PC-9 (cell line): ENCODE measurements at regions of chr12 and their contacts with region 1.

Region 1: DNA sequence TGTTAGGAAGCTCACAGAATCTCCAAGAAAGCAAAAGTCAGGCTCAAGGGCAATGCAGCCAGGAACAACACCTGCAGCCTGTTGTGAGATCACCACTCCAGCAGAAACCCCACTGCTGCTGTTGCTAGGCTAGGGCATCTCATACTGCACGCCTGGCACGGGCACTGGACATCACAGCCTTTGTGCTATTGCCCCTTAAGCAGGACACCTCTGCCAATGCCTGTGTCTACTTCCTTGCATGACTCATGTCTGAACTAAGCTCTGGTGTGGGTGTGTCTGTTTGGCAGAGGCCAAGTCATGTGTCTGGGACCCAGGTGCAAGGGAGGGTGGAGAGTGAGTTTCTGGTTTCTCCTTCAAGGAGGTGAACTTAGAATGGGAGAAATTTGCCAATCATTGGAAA is 10.0 kb upstream of the DDX47 start:
- DNase-seq: peak; percentile 97 to 100
- H3K4me3 ChIP-seq: peak overlapping the region; percentile 47; the same call in 1 of the 2 replicates
- H3K27ac ChIP-seq: peak overlapping the region; percentile 100
- H3K4me1 ChIP-seq: peaks cover 91% of the 10 kb centered on the region
- H3K27me3 ChIP-seq: no peaks in the 10 kb centered on the region
- CTCF ChIP-seq: no peak

Region 2: DNA sequence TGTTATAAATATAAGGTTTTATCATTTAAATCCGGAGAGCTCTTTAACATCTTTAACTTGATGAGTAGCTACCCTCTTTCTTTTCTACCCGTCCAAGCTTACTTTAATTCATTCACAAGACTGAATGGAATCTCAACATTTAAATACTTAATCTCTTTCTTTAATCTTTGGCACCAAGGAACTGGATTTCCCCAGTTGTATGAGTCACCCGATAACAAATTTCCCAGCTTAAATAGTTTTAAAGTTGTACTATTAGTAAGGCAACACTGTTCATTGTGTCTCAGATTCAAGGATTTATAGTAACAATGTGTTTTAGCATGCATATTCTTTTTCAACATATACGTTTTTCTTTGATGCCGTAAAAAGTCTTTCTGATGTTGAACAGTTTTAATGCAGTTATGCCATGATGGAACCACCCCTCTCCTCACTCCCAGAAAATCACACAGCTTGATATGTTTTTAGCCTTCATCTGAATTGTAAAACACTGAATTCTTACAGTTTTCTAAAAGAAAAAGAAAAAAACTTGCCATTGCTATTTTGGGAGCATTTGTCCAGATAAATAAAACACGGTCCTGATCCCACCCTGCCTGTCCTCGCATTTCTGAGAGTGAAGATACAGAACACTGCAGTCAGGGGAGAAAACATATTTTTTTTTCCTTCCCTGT is 520.3 kb before region 1 on chr12:
- CTCF ChIA-PET with region 1: no interaction called
- POLR2A ChIA-PET with region 1: interaction called, 16 read pairs
- intact Hi-C with region 1: no loop called
- DNase-seq: peak in 1 of 2 experiments; percentile 81
- H3K4me3 ChIP-seq: no peak overlapping the region
- H3K27ac ChIP-seq: 0 out of 2 replicates have a peak overlapping the region, but pooled peaks have one; percentile 25
- H3K4me1 ChIP-seq: peaks cover 14% of the 10 kb centered on the region
- H3K27me3 ChIP-seq: no peaks in the 10 kb centered on the region
- CTCF ChIP-seq: no peak

Region 3: DNA sequence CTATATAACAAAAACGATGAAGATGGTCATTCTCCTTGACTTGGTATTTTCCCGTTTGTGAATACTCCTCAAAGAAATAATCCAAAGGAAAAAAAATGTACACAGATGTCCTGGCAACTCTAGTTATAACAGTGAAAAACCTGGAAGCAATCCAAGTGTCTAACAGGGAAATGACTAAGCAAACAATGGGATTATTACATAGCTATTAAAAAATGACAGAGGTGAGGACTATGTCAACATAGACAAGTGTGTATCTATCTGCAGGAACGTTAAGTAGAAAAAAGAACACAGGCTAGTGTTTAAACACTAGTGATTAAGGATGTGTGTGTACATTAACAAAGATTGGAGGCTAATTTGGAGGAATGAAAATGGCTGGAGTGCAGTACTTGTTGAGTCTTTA is 23.7 kb before region 1 on chr12:
- CTCF ChIA-PET with region 1: no interaction called
- POLR2A ChIA-PET with region 1: interaction called, 24 read pairs
- intact Hi-C with region 1: no loop called
- DNase-seq: peak in 1 of 2 experiments; percentile 92
- H3K4me3 ChIP-seq: no peak overlapping the region
- H3K27ac ChIP-seq: peak overlapping the region; percentile 37
- H3K4me1 ChIP-seq: peaks cover 44% of the 10 kb centered on the region
- H3K27me3 ChIP-seq: no peaks in the 10 kb centered on the region
- CTCF ChIP-seq: no peak

Region 4: GRCh38 chr12:12837025-12837872 is 34.1 kb after region 1 on chr12:
- CTCF ChIA-PET with region 1: no interaction called
- POLR2A ChIA-PET with region 1: interaction called, 15 read pairs
- intact Hi-C with region 1: loop called (anchors 1 kb)
- DNase-seq: peak; percentile 74 to 85
- H3K4me3 ChIP-seq: no peak overlapping the region
- H3K27ac ChIP-seq: peak overlapping the region; percentile 99
- H3K4me1 ChIP-seq: peaks cover 97% of the 10 kb centered on the region
- H3K27me3 ChIP-seq: no peaks in the 10 kb centered on the region
- CTCF ChIP-seq: peak; percentile 80

Region 5: DNA sequence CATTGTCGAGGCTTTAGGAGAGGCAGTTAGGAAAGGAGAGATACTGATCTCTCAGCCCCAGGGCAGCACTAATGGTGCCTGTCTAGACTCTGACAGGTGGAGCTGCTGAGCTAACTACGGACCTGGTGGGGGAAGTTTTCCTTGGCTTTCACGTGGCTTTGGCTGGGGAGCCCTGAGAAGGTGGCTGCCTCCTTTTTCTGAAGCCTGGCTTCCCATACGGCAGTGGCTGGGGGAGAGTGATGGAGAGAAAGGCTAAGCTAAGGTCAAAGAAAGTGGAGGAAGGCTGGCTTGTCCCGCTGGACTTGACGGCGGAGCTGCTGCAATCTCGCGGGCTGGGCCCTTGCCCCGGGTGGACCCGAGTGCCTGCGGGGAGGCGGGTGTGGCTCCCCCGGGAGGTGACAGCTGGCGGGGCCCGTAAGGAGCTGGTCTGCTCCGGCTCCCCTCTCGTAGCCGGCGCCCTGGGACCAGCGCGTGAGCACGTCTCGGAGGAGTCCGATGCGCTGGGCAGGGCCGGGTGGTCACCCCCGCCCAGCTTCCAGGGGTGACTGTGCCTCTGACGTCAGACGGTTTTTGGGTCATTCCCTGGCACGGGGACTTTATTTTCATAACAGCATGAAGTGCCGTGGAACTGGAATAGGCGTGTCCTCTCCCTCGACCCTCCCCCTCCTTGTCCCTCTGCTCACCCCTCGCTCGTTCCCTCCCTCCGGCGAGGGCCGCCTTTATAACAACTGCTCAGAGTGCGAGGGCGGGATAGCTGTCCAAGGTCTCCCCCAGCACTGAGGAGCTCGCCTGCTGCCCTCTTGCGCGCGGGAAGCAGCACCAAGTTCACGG is 87.8 kb after region 1 on chr12 and contains the start of gene GPRC5A:
- CTCF ChIA-PET with region 1: no interaction called
- POLR2A ChIA-PET with region 1: interaction called, 22 read pairs
- intact Hi-C with region 1: no loop called
- DNase-seq: peak; percentile 96 to 100
- H3K4me3 ChIP-seq: peak within 1 kb of the TSS; percentile 86
- H3K27ac ChIP-seq: peak within 1 kb of the TSS; percentile 93
- H3K4me1 ChIP-seq: peaks cover 44% of the 10 kb centered on the region
- H3K27me3 ChIP-seq: no peaks in the 10 kb centered on the region
- CTCF ChIP-seq: no peak; the same call in 1 of the 2 replicates
- total RNA-seq, gene GPRC5A: 468 and 642 TPM in 2 replicates

Region 6: GRCh38 chr12:13173012-13173932 is 370.1 kb after region 1 on chr12:
- CTCF ChIA-PET with region 1: no interaction called
- POLR2A ChIA-PET with region 1: interaction called, 4 read pairs
- intact Hi-C with region 1: loop called (anchors 5 kb)
- DNase-seq: peak; percentile 93 to 97
- H3K4me3 ChIP-seq: peak overlapping the region; percentile 37; the same call in 1 of the 2 replicates
- H3K27ac ChIP-seq: peak overlapping the region; percentile 99
- H3K4me1 ChIP-seq: peaks cover 100% of the 10 kb centered on the region
- H3K27me3 ChIP-seq: no peaks in the 10 kb centered on the region
- CTCF ChIP-seq: no peak

Region 7: DNA sequence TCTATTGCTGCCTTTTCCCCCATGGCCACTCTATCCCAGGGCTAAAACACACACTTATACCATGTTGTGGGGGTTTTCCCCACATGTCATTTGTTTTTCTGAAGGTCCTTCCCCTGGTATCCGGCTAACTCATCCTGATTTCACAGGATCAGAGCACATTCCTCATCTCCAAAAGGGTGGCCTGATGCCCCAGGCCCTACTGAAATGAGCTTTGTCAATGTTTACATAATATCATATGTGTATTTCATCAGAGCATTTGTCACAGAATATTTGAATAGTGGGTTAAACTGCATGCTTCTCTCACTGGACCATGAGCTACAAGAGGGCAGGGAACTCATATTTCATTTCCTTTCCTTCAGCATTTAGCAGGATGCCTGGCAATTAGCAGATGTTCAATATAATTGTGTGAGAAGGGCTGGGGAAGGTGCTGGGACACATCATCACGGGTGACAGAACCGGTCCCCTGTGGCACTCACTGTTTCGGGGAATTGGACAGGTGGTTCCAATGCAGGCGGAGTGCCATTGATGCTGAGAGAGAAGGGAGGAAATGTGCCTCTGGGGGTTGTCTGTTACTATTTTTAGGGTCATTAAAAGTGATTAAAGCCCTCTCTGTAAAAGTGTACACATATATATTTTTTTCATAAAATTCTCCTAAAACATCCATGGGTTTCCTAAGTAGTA is 420.1 kb after region 1 on chr12:
- CTCF ChIA-PET with region 1: no interaction called
- POLR2A ChIA-PET with region 1: interaction called, 3 read pairs
- intact Hi-C with region 1: loop called (anchors 5 kb)
- DNase-seq: peak; percentile 71 to 95
- H3K4me3 ChIP-seq: no peak overlapping the region
- H3K27ac ChIP-seq: peak overlapping the region; percentile 96
- H3K4me1 ChIP-seq: peaks cover 46% of the 10 kb centered on the region
- H3K27me3 ChIP-seq: no peaks in the 10 kb centered on the region
- CTCF ChIP-seq: no peak